PC-3 (cell line): ENCODE measurements at regions of chr20 and their contacts with region 1.

Region 1: DNA sequence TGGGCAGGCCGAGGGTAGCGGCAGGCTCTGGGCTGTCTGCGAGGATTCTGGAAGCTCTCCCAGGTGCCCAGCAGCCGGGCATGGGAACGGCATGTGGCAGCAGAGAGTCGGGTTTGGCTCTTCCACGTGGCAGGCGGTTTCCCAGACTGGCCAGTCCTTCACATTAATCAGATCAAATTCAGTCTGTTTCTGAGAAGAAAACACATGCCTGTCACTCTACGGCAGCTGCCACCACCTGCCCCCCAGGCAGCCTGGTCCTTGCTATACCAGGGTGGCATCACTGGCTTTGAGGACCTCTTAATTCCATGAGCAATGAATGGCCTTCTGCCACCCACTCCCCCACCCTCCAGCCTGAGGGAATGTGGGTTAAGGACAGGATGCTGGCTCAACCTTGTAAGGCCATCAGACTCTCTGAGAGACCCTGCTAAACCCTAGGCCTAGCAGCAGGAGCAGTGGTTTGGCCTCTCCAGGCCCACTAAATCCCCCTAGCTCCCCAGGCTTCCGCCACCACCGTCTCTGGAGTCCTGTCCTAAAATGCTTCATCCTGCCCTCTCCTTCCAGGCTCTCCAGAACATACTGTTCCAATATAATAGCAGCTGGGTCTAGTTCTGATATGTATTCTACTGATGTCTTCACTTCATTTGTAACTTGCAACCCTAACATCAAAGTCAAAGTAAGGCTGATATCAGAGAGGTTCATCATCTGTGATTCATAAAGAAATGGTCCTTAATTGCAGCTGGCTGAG is 47.8 kb downstream of the PLCG1 start:
- DNase-seq: no peak
- ATAC-seq: no peak
- H3K4me3 ChIP-seq: no peak overlapping the region
- H3K27ac ChIP-seq: no peak overlapping the region
- H3K4me1 ChIP-seq: peaks cover 15% of the 10 kb centered on the region
- H3K27me3 ChIP-seq: no peaks in the 10 kb centered on the region
- CTCF ChIP-seq: no peak

Region 2: DNA sequence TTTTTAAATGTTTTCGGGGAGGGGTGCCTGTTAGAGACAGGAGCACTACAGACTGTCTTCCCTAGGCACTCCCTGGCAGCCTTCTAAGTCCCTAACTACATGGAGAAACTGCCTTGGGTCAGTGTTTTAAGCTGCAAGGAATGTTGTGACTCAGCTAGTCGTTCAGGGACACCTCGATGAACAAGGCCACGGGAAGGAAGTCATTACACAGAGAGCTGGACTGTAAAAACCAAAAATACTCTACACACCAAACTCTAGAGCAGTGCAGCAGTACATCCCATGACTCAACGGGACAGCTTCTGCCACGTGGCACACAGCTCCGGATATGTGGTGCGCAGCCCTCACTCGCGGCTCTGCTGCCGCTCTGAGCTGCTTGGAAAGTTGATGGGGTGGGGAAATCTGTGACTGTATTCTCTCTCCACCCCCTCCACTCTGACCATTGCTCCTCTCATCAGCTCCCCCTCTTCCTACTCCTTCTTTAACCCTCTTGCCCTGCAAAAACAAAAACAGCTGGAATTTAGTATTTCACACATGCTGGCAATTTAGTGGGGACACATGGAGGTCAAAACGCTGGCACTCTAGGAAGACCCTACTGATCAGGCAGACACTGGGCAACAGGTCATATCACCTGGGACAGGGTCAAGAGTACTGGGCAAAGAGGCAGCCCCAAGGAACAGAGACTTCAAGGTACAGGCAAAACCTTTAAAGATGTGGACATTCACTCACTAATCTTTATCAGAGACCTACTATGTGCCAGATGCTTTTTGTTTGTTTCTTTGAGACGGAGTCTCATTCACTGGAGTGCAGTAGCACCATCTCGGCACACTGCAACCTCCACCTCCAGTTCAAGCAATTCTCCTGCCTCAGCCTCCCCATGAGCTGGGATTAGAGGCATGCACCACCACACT is 144.5 kb after region 1 on chr20:
- CTCF ChIA-PET with region 1: no interaction called
- POLR2A ChIA-PET with region 1: no interaction called
- intact Hi-C with region 1: loop called (anchors 5 kb)
- DNase-seq: peak; percentile 96
- ATAC-seq: peak; percentile 99
- H3K4me3 ChIP-seq: peak overlapping the region; percentile 1; the same call in 1 of the 2 replicates
- H3K27ac ChIP-seq: peak overlapping the region; percentile 74
- H3K4me1 ChIP-seq: peaks cover 16% of the 10 kb centered on the region
- H3K27me3 ChIP-seq: no peaks in the 10 kb centered on the region
- CTCF ChIP-seq: no peak